Calu3 (cell line): ENCODE measurements at regions of chr14 and their contacts with region 1.

Region 1: DNA sequence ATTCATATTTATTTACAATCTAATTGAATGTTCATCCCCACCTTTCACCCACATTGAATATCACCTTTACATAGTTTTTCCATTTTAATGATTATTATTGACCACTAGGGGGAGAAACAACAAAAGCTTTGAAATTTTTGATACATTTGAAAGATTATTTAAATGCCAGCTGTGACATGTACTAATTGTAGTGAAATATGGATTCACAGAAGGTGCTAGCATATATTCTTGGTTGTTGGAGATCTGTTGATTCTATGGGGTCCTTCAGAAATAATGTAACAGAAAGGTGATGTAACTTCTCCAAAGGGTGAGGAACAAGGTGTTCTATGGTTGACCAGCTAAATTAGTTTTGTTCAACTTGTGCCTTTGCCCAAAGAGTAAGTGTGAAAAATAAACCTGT is 22.4 kb upstream of the GPR33 start:
- DNase-seq: no peak
- H3K4me3 Mint-ChIP-seq: no peak overlapping the region
- H3K27ac Mint-ChIP-seq: no peak overlapping the region
- H3K4me1 Mint-ChIP-seq: no peaks in the 10 kb centered on the region
- H3K27me3 Mint-ChIP-seq: no peaks in the 10 kb centered on the region
- CTCF ChIP-seq: no peak

Region 2: GRCh38 chr14:31166271-31166710 is 343.9 kb before region 1 on chr14:
- CTCF ChIA-PET with region 1: no interaction called
- intact Hi-C with region 1: no loop called
- DNase-seq: no peak
- H3K4me3 Mint-ChIP-seq: peak overlapping the region; percentile 9
- H3K27ac Mint-ChIP-seq: peak overlapping the region; percentile 40
- H3K4me1 Mint-ChIP-seq: peaks cover 18% of the 10 kb centered on the region
- H3K27me3 Mint-ChIP-seq: no peaks in the 10 kb centered on the region
- CTCF ChIP-seq: no peak

Region 3: DNA sequence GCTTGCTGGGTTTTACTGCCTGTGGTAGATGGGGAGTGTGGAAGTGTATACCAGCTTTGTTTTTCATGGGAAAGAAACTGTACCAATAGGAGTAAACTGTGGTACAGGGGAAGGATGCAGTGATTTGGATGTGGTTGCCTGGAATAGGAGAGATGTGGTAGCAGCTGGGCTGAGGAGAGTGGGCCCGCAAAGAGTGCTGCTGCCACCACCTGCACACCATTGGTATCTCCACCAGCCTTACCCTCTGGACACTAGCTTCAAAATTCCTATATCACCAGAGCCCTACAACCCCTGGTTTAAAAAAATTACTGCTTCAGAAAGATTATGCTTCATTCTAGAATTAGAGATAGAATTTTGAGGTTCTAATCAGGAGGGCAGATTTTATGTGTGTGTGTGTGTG is 872.5 kb after region 1 on chr14:
- CTCF ChIA-PET with region 1: no interaction called
- intact Hi-C with region 1: loop called (anchors 10 kb)
- DNase-seq: peak; percentile 61
- H3K4me3 Mint-ChIP-seq: no peak overlapping the region
- H3K27ac Mint-ChIP-seq: no peak overlapping the region
- H3K4me1 Mint-ChIP-seq: peaks cover 45% of the 10 kb centered on the region
- H3K27me3 Mint-ChIP-seq: no peaks in the 10 kb centered on the region
- CTCF ChIP-seq: peak; percentile 46

Region 4: DNA sequence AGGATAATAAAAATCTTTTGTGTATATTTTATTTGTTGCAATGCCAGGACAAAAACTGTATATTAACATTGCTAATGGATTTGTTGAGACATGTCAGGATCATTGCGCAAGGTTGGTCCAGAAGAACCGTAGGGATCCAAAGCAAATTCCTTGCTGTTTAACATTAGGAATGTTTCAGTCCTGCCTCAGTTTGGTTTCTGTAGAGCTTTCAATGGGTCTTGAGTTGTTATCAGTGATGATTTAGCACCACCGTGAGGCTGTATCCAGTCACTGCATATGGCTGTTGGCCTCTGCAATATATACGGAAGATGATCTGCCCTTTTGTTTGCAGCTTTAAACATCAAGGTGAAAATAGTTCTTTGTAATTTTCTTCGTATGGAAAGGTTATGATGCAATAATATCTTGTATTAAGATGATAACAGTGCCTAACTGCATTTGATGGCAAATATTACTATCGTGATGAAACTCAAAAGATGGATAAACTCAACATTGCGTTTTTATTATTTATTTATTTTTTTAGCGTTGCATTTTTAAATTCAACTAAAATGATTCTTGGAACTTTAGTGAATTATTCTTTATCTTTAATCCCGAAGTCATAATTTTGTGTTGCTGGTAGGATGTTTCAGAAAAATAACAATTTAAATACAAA is 1050.1 kb after region 1 on chr14:
- CTCF ChIA-PET with region 1: interaction called, 3 read pairs
- intact Hi-C with region 1: loop called (anchors 10 kb)
- DNase-seq: peak; percentile 64
- H3K4me3 Mint-ChIP-seq: no peak overlapping the region
- H3K27ac Mint-ChIP-seq: no peak overlapping the region
- H3K4me1 Mint-ChIP-seq: no peaks in the 10 kb centered on the region
- H3K27me3 Mint-ChIP-seq: no peaks in the 10 kb centered on the region
- CTCF ChIP-seq: peak; percentile 75